Activated T-helper 2 cell treated with anti-CD3 and anti-CD28 coated beads, Interferon-gamma antibody, Interleukin-2, Interleukin-4, amounts not matched to agents 10 μg/mL and 5 μg/mL and 100 μg/mL, durations not matched to agents 14 hours and 24 hours and 36 hours (primary cell): ENCODE measurements at regions of chr4 and their contacts with region 1.

Region 1: GRCh38 chr4:118278473-118279274 is 74.1 kb downstream of the PRSS12 start:
- DNase-seq: peak; percentile 93
- H3K4me3 Mint-ChIP-seq: peak overlapping the region; percentile 85
- H3K27ac Mint-ChIP-seq: peak overlapping the region; percentile 98
- H3K4me1 Mint-ChIP-seq: peaks cover 29% of the 10 kb centered on the region
- H3K27me3 Mint-ChIP-seq: peaks cover 2% of the 10 kb centered on the region

Region 2: GRCh38 chr4:118154649-118155048 is 124.0 kb before region 1 on chr4:
- intact Hi-C with region 1: loop called (anchors 5 kb)
- DNase-seq: no peak
- H3K4me3 Mint-ChIP-seq: no peak overlapping the region
- H3K27ac Mint-ChIP-seq: no peak overlapping the region
- H3K4me1 Mint-ChIP-seq: peaks cover 17% of the 10 kb centered on the region
- H3K27me3 Mint-ChIP-seq: no peaks in the 10 kb centered on the region

Region 3: GRCh38 chr4:118224239-118224829 is 54.3 kb before region 1 on chr4:
- intact Hi-C with region 1: loop called (anchors 5 kb)
- DNase-seq: no peak
- H3K4me3 Mint-ChIP-seq: no peak overlapping the region
- H3K27ac Mint-ChIP-seq: no peak overlapping the region
- H3K4me1 Mint-ChIP-seq: peaks cover 17% of the 10 kb centered on the region
- H3K27me3 Mint-ChIP-seq: peaks cover 10% of the 10 kb centered on the region

Region 4: GRCh38 chr4:118586357-118586790 is 307.7 kb after region 1 on chr4:
- intact Hi-C with region 1: loop called (anchors 10 kb)
- DNase-seq: no peak
- H3K4me3 Mint-ChIP-seq: no peak overlapping the region
- H3K27ac Mint-ChIP-seq: no peak overlapping the region
- H3K4me1 Mint-ChIP-seq: peaks cover 7% of the 10 kb centered on the region
- H3K27me3 Mint-ChIP-seq: peaks cover 10% of the 10 kb centered on the region

Region 5: GRCh38 chr4:119212234-119212963 is 933.7 kb after region 1 on chr4 and contains the start of gene USP53:
- intact Hi-C with region 1: loop called (anchors 10 kb)
- DNase-seq: peak; percentile 93
- H3K4me3 Mint-ChIP-seq: peak within 1 kb of the TSS; percentile 91
- H3K27ac Mint-ChIP-seq: peak within 1 kb of the TSS; percentile 88
- H3K4me1 Mint-ChIP-seq: peaks cover 33% of the 10 kb centered on the region
- H3K27me3 Mint-ChIP-seq: peaks cover 8% of the 10 kb centered on the region
- total RNA-seq, gene USP53: 6.6 and 7.3 TPM in 2 replicates